ENCODE measurements at regions of chr14 and their contacts with region 1.

Region 1: DNA sequence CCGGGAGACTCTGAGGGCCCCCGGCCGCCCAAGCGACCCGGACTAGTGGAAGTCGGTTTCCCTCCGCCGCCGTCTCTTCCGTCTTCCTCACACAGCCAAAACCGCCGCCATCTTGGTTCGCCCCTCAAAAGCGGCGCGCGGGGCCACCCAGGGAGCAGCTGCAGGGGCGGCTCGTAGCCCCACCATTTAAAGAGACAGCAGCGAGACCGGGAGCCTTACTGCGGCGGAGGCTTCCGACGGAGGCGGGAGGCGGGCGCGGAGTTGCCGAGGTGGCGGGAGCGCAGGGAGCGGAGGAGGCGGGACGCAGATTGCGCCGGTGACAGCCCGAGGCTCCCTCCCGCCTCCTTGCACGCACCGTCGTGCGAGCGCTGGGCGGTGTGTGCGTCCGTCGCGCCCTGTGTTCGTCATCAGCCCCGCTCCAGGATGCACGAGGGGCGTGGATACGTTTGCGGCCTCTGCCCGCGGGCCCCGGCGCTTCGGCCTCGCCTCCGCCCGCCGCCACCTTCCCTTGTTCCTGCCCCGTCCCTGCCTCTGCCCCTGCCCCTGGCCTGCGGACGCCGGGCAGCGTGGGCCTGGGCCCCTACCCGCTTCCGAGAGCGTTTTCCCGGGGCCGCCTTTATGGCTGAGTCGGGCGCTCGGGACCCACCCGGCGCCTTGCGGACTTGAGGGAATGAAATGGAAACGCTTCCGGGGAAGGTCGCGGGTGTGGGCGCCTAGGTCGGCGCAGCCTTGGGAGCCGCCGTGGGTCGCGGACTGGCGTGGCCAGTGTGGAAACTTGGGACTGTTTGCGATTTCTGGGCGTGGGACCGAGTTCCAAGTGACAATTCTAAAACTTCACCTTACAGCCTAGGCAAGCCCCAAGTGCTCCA is at the start of gene PPP4R3A:
- DNase-seq: peak; percentile 86 to 96 (median 95)
- ATAC-seq: peak; percentile 92
- H3K4me3 ChIP-seq: peak within 1 kb of the TSS; percentile 62
- H3K4me3 Mint-ChIP-seq: peak within 1 kb of the TSS; percentile 93 to 100 (median 98)
- H3K27ac ChIP-seq: peak within 1 kb of the TSS; percentile 99
- H3K27ac Mint-ChIP-seq: peak within 1 kb of the TSS; percentile 100
- H3K4me1 ChIP-seq: peaks cover 14 to 22% of the 10 kb centered on the region in 2 donors
- H3K4me1 Mint-ChIP-seq: peaks cover 15 to 38% (median 32%) of the 10 kb centered on the region in 7 donors
- H3K27me3 ChIP-seq: no peaks in the 10 kb centered on the region
- H3K27me3 Mint-ChIP-seq: no peaks in the 10 kb centered on the region
- total RNA-seq, gene PPP4R3A: 129 to 214 (median 167) TPM

Region 2: DNA sequence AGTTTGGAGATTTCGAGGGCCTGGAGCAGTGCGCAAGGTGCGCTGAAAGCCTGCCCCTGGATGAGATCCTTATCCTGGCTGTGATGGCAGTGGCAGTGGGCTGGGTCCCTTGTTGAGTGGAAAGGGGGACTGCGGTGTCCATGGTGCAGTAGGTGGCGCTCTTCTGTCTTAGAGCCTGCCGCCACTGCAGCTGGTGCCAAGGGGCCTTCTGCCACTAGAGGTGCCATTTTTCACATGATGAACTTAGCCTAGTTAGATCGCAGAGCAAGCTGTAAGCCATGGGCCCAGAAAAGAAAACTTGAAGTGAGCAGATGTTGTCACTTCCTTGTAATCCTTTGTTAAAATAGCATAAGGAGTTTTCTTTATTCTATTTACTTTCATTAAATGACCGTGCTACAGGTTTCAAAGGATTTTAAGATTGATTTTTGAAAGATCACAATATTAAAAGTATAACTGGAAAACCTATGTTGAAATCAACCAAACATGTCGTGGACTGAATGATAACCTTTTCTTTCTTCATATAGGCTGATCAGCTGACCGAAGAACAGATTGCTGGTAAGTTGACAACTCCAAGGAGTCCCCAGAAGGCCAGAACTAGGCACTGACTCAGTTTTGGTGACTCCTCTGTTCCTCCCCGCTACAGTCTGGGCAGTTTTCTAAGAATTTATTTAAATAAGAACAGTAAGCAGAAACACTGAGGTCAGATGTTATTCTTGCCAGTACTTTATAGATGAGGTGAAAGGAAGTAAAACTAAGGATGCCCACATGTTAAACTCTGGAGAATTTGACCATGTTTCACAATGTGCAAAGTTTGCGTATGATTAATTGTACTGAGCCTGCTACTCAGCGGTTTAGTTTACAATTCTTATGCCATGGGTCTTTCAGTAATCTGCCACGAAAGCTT is 1110.6 kb before region 1 on chr14:
- CTCF ChIA-PET with region 1: no interaction called
- POLR2A ChIA-PET with region 1: no interaction called
- intact Hi-C with region 1: loop called (anchors 2 kb)
- DNase-seq: peak; percentile 60 to 89 (median 85)
- ATAC-seq: peak; percentile 69
- H3K4me3 ChIP-seq: peak overlapping the region; percentile 78
- H3K4me3 Mint-ChIP-seq: peak overlapping the region; percentile 91 to 100 (median 98)
- H3K27ac ChIP-seq: peak overlapping the region; percentile 92
- H3K27ac Mint-ChIP-seq: peak overlapping the region; percentile 38 to 100 (median 99)
- H3K4me1 ChIP-seq: peaks cover 49 to 50% of the 10 kb centered on the region in 2 donors
- H3K4me1 Mint-ChIP-seq: peaks cover 45 to 70% (median 62%) of the 10 kb centered on the region in 7 donors
- H3K27me3 ChIP-seq: no peaks in the 10 kb centered on the region
- H3K27me3 Mint-ChIP-seq: peaks cover 0 to 7% (median 0%) of the 10 kb centered on the region in 5 donors

Region 3: GRCh38 chr14:91317381-91318308 is 192.8 kb before region 1 on chr14:
- CTCF ChIA-PET with region 1: no interaction called
- POLR2A ChIA-PET with region 1: interaction called, 4 read pairs
- intact Hi-C with region 1: loop called (anchors 2 to 5 kb)
- DNase-seq: peak; percentile 58 to 86 (median 84)
- ATAC-seq: peak; percentile 60
- H3K4me3 ChIP-seq: peak overlapping the region; percentile 39
- H3K4me3 Mint-ChIP-seq: peak overlapping the region; percentile 73 to 88 (median 81)
- H3K27ac ChIP-seq: peak overlapping the region; percentile 82
- H3K27ac Mint-ChIP-seq: peak overlapping the region; percentile 93 to 99 (median 98)
- H3K4me1 ChIP-seq: peaks cover 58 to 61% of the 10 kb centered on the region in 2 donors
- H3K4me1 Mint-ChIP-seq: peaks cover 55 to 88% (median 70%) of the 10 kb centered on the region in 7 donors
- H3K27me3 ChIP-seq: no peaks in the 10 kb centered on the region
- H3K27me3 Mint-ChIP-seq: no peaks in the 10 kb centered on the region

Region 4: GRCh38 chr14:91470216-91470615 is 40.2 kb before region 1 on chr14:
- CTCF ChIA-PET with region 1: no interaction called
- POLR2A ChIA-PET with region 1: no interaction called
- intact Hi-C with region 1: loop called in 1 of 2 experiments (anchors 5 kb)
- DNase-seq: no peak
- ATAC-seq: no peak
- H3K4me3 ChIP-seq: no peak overlapping the region
- H3K4me3 Mint-ChIP-seq: no peak overlapping the region
- H3K27ac ChIP-seq: peak overlapping the region; percentile 24
- H3K27ac Mint-ChIP-seq: peak overlapping the region in 4 of 9 donors; percentile 34 to 76 (median 56)
- H3K4me1 ChIP-seq: no peaks in the 10 kb centered on the region
- H3K4me1 Mint-ChIP-seq: peaks cover 2 to 29% (median 20%) of the 10 kb centered on the region in 7 donors
- H3K27me3 ChIP-seq: no peaks in the 10 kb centered on the region
- H3K27me3 Mint-ChIP-seq: no peaks in the 10 kb centered on the region

Region 5: DNA sequence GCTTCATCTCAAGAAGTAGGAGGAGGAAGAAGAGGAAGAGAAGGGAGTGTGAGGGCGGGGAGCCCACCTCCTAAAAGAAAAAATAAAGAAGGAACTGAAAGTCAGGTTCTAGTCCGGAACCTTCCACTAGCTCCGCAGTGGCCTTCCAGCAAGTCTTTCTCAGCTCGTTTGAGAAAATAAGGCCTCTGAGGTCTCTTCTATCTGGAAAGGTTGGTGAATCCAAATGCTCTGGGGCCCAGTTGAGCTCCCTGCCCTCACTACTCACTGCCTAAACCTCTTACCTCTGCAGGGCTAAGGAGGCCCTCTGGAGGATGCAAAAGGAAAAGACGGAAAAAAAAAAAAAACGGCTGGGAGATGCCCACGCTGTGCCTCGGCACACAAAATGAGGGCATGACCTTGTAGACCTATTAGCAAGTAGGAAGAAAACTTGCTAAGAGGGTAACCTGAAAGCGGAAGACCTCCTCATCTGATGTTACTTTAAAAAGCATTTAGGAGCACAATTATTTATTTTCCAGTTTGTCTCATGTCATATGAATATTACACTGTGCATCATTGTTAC is 401.1 kb after region 1 on chr14:
- CTCF ChIA-PET with region 1: no interaction called
- POLR2A ChIA-PET with region 1: interaction called, 5 read pairs
- intact Hi-C with region 1: loop called (anchors 2 to 10 kb)
- DNase-seq: peak in 7 of 9 donors; percentile 39 to 76 (median 64)
- ATAC-seq: peak; percentile 95
- H3K4me3 ChIP-seq: no peak overlapping the region
- H3K4me3 Mint-ChIP-seq: peak overlapping the region in 8 of 10 donors; percentile 3 to 65 (median 32)
- H3K27ac ChIP-seq: no peak overlapping the region
- H3K27ac Mint-ChIP-seq: peak overlapping the region in 7 of 9 donors; percentile 66 to 89 (median 83)
- H3K4me1 ChIP-seq: peaks cover 0 to 9% of the 10 kb centered on the region in 2 donors
- H3K4me1 Mint-ChIP-seq: peaks cover 11 to 27% (median 23%) of the 10 kb centered on the region in 7 donors
- H3K27me3 ChIP-seq: no peaks in the 10 kb centered on the region
- H3K27me3 Mint-ChIP-seq: peaks cover 0 to 2% (median 0%) of the 10 kb centered on the region in 5 donors

Region 6: DNA sequence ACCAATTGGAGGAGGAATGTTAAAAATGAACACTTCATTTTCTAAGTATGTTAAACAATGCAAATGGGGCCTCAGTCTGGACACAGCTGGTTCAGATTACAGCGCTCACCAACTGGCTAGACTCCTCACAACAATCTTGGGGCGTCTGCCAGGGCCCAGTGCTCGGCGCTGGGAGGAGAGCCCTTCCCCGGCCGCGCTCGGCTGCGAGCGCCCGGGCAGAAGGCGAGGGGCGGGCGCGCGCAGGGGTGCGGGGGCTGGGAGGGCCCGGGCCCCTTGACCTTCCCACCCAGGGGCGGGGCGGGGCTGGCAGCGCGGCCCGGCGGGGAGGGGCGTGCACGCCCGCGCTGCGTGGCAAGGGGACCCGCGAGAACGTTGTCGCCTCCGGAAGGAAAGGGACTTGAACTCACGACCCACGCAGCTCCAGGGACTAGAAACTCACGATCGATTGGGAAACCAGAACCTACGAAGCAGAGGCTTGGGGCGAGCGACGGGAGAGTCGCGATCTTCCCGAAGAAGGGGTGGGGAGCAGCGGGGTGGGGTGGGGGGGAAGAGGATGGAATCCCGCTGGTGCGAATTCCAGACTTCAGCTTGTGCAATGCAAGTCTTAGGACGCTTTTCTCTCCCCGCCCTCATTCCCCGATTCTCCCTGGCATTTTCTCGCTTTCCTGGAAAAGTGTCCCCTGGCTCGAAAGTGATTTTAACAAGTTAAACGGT is 437.2 kb after region 1 on chr14 and contains the start of gene FBLN5:
- CTCF ChIA-PET with region 1: no interaction called
- POLR2A ChIA-PET with region 1: no interaction called
- intact Hi-C with region 1: no loop called
- DNase-seq: peak in 8 of 9 donors; percentile 7 to 32 (median 14)
- ATAC-seq: peak; percentile 70
- H3K4me3 ChIP-seq: peak within 1 kb of the TSS; percentile 57
- H3K4me3 Mint-ChIP-seq: peak within 1 kb of the TSS; percentile 79 to 94 (median 87)
- H3K27ac ChIP-seq: no peak within 1 kb of the TSS
- H3K27ac Mint-ChIP-seq: peak within 1 kb of the TSS in 6 of 9 donors; percentile 23 to 76 (median 56)
- H3K4me1 ChIP-seq: peaks cover 4 to 12% of the 10 kb centered on the region in 2 donors
- H3K4me1 Mint-ChIP-seq: peaks cover 6 to 19% (median 15%) of the 10 kb centered on the region in 7 donors
- H3K27me3 ChIP-seq: peaks cover 0 to 11% of the 10 kb centered on the region in 2 donors
- H3K27me3 Mint-ChIP-seq: peaks cover 25 to 60% (median 29%) of the 10 kb centered on the region in 5 donors
- total RNA-seq, gene FBLN5: 2.9 to 11.7 (median 7.2) TPM

Region 7: GRCh38 chr14:92121670-92122350 is 611.4 kb after region 1 on chr14 and contains the starts of genes CPSF2 and NDUFB1:
- CTCF ChIA-PET with region 1: no interaction called
- POLR2A ChIA-PET with region 1: no interaction called
- intact Hi-C with region 1: loop called in 1 of 2 experiments (anchors 5 kb)
- DNase-seq: peak; percentile 74 to 87 (median 85)
- ATAC-seq: peak; percentile 92
- H3K4me3 ChIP-seq: peak within 1 kb of the TSS; percentile 78
- H3K4me3 Mint-ChIP-seq: peak within 1 kb of the TSS; percentile 88 to 100 (median 99)
- H3K27ac ChIP-seq: peak within 1 kb of the TSS; percentile 92
- H3K27ac Mint-ChIP-seq: peak within 1 kb of the TSS; percentile 96 to 100 (median 100)
- H3K4me1 ChIP-seq: peaks cover 17 to 19% of the 10 kb centered on the region in 2 donors
- H3K4me1 Mint-ChIP-seq: peaks cover 27 to 72% (median 53%) of the 10 kb centered on the region in 7 donors
- H3K27me3 ChIP-seq: no peaks in the 10 kb centered on the region
- H3K27me3 Mint-ChIP-seq: no peaks in the 10 kb centered on the region
- total RNA-seq, gene CPSF2: 30.2 to 77.4 (median 60.4) TPM
- total RNA-seq, gene NDUFB1: 55.1 to 107 (median 89.7) TPM